ENCODE measurements at regions of chr12 and their contacts with region 1.

Region 1: DNA sequence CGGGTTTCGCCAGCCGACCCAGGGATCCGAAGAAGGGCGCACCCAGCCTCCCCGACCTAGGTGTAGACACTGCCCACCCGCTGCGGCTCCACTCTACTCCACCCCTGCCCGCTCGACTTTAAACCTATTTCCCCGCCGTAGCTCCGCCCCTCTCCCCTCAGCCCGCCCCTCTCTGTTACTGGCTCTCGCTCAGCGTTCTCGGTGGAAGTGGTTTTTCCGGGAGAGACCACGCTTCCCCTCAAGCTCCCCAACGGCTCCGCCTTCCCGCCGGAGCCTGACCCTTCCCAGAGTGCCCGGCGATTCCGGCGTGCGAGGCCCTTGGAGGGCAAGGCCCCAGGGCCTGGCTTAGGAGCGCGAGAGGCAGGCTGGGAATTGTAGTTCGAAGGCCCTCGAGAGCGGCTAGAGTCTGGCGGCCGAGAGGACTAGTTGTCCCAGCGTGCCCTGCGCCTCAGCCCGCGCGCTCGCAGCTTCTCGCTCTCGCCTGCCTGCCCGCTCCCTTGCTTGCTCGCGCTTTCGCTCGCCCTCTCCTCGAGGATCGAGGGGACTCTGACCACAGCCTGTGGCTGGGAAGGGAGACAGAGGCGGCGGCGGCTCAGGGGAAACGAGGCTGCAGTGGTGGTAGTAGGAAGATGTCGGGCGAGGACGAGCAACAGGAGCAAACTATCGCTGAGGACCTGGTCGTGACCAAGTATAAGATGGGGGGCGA is at the start of gene PA2G4:
- DNase-seq: peak; percentile 97
- H3K4me3 ChIP-seq: peak within 1 kb of the TSS; percentile 92
- H3K27ac ChIP-seq: peak within 1 kb of the TSS; percentile 21
- H3K27me3 ChIP-seq: no peaks in the 10 kb centered on the region
- CTCF ChIP-seq: no peak
- polyA plus RNA-seq, gene PA2G4: 169 and 223 TPM in 2 replicates

Region 2: GRCh38 chr12:56041552-56042429 is 62.5 kb before region 1 on chr12 and contains the start of gene RPS26:
- CTCF ChIA-PET with region 1: interaction called, 6 read pairs
- POLR2A ChIA-PET with region 1: interaction called, 17 read pairs
- DNase-seq: peak; percentile 99
- H3K4me3 ChIP-seq: peak within 1 kb of the TSS; percentile 92
- H3K27ac ChIP-seq: peak within 1 kb of the TSS; percentile 92
- H3K27me3 ChIP-seq: no peaks in the 10 kb centered on the region
- CTCF ChIP-seq: peak; percentile 46
- polyA plus RNA-seq, gene RPS26: 348 and 382 TPM in 2 replicates

Region 3: GRCh38 chr12:56053407-56053893 is 50.8 kb before region 1 on chr12:
- CTCF ChIA-PET with region 1: interaction called, 4 read pairs
- POLR2A ChIA-PET with region 1: interaction called, 16 read pairs
- DNase-seq: no peak
- H3K4me3 ChIP-seq: no peak overlapping the region
- H3K27ac ChIP-seq: no peak overlapping the region
- H3K27me3 ChIP-seq: no peaks in the 10 kb centered on the region
- CTCF ChIP-seq: no peak

Region 4: DNA sequence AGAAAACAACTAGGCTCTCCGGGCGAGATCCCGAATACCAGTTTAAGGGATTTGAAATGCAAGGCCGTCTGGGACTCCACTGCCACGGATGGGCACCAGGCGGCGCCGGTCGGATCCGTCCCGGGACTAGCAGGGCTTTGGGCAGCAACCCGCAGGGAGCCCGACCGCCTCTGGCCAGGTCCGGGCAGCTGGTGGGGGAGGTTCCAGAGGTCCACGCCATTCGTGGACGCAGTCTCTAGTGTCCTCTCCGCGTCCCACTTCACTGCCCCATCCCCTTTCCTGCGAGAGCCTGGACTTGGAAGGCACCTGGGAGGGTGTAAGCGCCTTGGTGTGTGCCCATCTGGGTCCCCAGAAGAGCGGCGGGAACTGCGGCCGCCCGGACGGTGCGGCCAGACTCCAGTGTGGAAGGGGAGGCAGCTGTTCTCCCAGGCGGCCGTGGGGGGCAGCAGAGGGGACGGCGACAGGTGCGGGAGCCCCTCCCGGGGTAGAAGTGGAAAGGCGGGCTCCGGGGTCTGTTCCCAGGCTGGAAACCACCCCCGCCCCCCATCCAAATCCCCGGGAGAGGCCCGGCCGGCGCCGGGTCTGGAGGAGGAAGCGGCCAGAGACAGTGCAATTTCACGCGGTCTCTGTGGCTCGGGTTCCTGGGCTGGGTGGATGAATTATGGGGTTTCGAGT is 25.1 kb before region 1 on chr12:
- CTCF ChIA-PET with region 1: interaction called, 6 read pairs
- POLR2A ChIA-PET with region 1: interaction called, 19 read pairs
- DNase-seq: peak; percentile 44
- H3K4me3 ChIP-seq: peak overlapping the region; percentile 69
- H3K27ac ChIP-seq: no peak overlapping the region
- H3K27me3 ChIP-seq: peaks cover 37% of the 10 kb centered on the region
- CTCF ChIP-seq: peak; percentile 80

Region 5: DNA sequence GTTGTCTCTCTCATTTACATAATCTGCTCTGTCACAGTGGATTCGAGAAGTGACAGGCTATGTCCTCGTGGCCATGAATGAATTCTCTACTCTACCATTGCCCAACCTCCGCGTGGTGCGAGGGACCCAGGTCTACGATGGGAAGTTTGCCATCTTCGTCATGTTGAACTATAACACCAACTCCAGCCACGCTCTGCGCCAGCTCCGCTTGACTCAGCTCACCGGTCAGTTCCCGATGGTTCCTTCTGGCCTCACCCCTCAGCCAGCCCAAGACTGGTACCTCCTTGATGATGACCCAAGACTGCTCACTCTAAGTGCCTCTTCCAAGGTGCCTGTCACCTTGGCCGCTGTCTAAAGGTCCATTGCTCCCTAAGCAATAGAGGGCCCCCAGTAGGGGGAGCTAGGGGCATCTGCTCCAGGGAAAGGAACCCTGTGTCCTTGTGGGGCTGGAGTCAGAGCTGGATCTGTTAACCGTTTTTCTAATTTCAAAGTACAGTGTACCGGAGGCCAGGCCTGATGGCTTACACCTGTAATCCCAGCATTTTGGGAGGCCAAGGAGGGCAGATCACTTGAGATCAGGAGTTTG is 19.2 kb before region 1 on chr12:
- CTCF ChIA-PET with region 1: interaction called, 6 read pairs
- POLR2A ChIA-PET with region 1: interaction called, 19 read pairs
- DNase-seq: no peak
- H3K4me3 ChIP-seq: no peak overlapping the region
- H3K27ac ChIP-seq: no peak overlapping the region
- H3K27me3 ChIP-seq: peaks cover 39% of the 10 kb centered on the region
- CTCF ChIP-seq: peak; percentile 37

Region 6: GRCh38 chr12:56117778-56118687 is 13.8 kb after region 1 on chr12 and contains the start of gene ZC3H10:
- CTCF ChIA-PET with region 1: interaction called, 12 read pairs
- POLR2A ChIA-PET with region 1: interaction called, 42 read pairs
- DNase-seq: peak; percentile 99
- H3K4me3 ChIP-seq: peak within 1 kb of the TSS; percentile 93
- H3K27ac ChIP-seq: peak within 1 kb of the TSS; percentile 90
- H3K27me3 ChIP-seq: no peaks in the 10 kb centered on the region
- CTCF ChIP-seq: peak; percentile 62
- polyA plus RNA-seq, gene ZC3H10: 1.5 and 1.9 TPM in 2 replicates

Region 7: GRCh38 chr12:56127888-56128669 is 23.8 kb after region 1 on chr12 and contains the start of gene ESYT1:
- CTCF ChIA-PET with region 1: no interaction called
- POLR2A ChIA-PET with region 1: interaction called, 10 read pairs
- DNase-seq: peak; percentile 99
- H3K4me3 ChIP-seq: peak within 1 kb of the TSS; percentile 90
- H3K27ac ChIP-seq: peak within 1 kb of the TSS; percentile 78
- H3K27me3 ChIP-seq: no peaks in the 10 kb centered on the region
- CTCF ChIP-seq: no peak
- polyA plus RNA-seq, gene ESYT1: 127 and 140 TPM in 2 replicates

Measured in AG04450 (cell line).